RWPE1 (cell line): ENCODE measurements at regions of chr1 and their contacts with region 1.

Region 1: DNA sequence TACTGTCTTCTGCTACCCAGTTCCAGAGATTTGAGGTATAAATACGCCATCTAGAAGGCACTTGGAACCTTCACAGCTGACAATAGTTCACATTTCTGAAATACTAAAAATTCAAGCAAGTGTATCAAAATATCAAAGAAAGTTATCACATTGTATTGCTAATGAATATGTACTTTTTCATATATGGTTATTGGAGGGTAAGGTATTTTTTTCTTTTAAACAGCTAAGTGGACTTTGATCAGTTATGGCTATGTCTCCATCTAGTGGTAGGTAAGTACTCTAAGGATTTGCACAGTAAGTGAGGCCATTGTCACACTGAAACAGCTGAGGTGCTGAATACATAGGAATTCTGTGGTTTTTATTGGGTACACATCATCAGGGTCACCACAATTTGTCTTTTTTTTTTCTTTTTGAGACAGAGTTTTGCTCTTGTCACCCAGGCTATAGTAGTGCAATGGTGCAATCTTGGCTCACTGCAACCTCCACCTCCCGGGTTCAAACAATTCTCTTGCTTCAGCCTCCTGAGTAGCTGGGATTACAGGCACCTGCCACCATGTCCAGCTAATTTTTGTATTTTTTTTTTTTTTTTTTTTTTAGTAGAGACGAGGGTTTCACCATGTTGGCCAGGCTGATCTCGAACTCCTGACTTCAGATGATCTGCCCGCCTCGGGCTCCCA is 49.1 kb upstream of the CR2 start:
- DNase-seq: peak; percentile 61
- H3K27ac ChIP-seq: no peak overlapping the region
- CTCF ChIP-seq: peak; percentile 80

Region 2: GRCh38 chr1:207181838-207182237 is 223.1 kb before region 1 on chr1:
- CTCF ChIA-PET with region 1: interaction called, 28 read pairs
- POLR2A ChIA-PET with region 1: no interaction called
- DNase-seq: peak; percentile 22
- H3K27ac ChIP-seq: no peak overlapping the region
- CTCF ChIP-seq: peak; percentile 32; the same call in 1 of the 2 replicates

Region 3: DNA sequence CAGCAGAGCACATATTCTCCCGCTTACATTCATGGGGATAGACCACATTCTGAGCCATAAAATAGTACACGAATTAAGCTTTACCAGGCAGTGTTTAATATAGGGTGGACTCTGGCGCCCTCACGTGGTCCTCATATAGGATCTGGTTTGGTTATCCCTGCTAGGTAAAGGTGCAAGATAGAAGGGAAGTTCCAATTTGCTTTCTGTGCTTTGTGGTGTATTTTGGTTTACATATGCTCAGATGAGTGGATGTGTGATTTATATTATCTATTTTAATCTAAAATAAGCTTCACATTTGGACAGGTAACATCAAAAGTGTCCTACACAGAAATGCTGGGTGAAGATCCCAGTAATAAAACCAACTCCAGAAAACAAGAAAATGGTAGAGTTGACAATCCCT is 94.6 kb after region 1 on chr1:
- CTCF ChIA-PET with region 1: interaction called, 14 read pairs
- POLR2A ChIA-PET with region 1: no interaction called
- DNase-seq: peak; percentile 60
- H3K27ac ChIP-seq: no peak overlapping the region
- CTCF ChIP-seq: peak; percentile 78

Region 4: GRCh38 chr1:207644852-207645634 is 240.1 kb after region 1 on chr1 and contains the start of gene CR1L:
- CTCF ChIA-PET with region 1: no interaction called
- POLR2A ChIA-PET with region 1: no interaction called
- DNase-seq: peak; percentile 80
- H3K27ac ChIP-seq: no peak within 1 kb of the TSS
- CTCF ChIP-seq: no peak